CD8-positive, alpha-beta T cell (primary cell): ENCODE measurements at regions of chr1 and their contacts with region 1.

Region 1: DNA sequence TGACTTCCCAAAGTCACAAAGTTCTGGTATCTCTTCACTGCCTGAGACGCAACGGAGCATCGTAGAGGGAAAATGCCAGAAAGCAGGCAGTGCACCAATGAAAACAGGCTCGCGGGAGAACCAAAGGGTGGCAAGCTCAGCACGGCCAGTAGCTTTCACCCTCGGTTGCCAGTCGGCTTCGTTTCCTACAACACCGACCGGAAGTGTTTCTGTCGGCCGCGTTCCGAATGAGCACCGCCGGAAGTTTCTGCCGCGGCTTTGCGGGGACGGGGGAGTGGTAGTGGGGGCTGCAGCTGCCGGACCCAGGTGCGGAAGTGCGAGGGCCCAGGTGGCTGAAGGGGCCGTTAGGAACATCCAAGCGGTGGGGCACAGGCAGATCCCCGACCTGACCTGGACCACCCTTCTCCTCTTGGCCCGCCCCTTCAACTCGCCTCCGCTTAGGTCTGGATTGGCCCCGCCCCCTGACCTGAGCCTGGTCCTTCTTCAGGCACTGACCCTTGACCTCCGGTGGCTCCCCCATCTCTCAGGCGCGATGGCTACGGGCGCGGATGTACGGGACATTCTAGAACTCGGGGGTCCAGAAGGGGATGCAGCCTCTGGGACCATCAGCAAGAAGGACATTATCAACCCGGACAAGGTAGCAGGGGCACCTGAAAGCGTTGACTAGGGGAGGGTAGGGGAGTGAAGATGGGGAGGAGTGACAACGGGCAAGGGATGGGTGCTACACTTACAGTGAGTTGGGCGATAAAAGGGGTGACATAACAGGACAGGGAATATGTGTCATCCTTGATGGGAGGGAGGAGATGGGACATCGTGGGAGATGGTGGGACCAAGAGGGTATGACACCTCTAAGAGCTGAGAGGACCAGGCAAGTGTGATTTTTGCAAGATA is at the start of gene DMAP1:
- DNase-seq: peak; percentile 75 to 95 (median 86)
- ATAC-seq: peak; percentile 83
- H3K4me3 ChIP-seq: peak within 1 kb of the TSS; percentile 91
- H3K4me3 Mint-ChIP-seq: peak within 1 kb of the TSS; percentile 95
- H3K27ac ChIP-seq: peak within 1 kb of the TSS; percentile 61 to 74
- H3K27ac Mint-ChIP-seq: peak within 1 kb of the TSS; percentile 83
- H3K4me1 ChIP-seq: peaks cover 18% of the 10 kb centered on the region
- H3K4me1 Mint-ChIP-seq: peaks cover 42% of the 10 kb centered on the region
- H3K27me3 ChIP-seq: no peaks in the 10 kb centered on the region
- H3K27me3 Mint-ChIP-seq: no peaks in the 10 kb centered on the region
- CTCF ChIP-seq: no peak
- total RNA-seq, gene DMAP1: 59.0 to 59.5 TPM

Region 2: DNA sequence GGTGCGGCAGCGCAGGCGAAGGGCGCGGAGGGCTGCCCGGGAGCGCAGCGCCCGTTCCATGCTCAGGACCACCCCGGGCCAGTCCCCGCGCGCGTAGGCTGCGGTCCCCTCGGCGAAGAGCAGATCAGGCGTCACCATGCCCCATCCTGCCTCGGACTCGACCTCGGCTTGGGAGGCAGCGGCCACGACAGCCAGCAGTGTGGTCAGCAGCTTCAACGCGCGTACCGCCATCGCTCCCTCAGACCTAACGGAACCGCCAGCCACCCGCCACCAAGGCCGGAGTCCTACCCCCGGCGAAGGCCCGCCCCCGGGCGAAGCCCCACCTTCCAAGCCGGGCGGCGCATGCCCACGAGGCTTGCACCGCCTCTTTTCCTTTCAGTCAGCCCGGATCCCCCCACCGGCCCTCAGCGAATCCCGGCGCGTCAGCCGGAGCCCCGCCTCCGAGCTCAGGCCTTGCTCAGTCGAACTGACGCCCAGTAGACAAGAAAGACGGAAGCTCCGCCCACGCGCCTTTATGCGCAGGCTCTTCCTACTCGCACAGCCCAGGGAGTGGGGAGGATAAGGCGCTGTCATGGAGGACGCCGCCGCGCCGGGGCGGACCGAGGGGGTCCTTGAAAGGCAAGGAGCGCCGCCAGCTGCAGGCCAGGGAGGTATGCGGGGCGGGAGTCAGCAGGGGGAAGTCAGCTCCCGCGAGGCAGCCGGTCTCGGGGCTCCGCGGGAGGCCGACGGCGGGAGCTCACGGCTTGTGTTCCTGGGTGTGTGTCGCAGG is 1446.5 kb before region 1 on chr1 and contains the starts of genes C1orf50 and P3H1:
- CTCF ChIA-PET with region 1: no interaction called
- POLR2A ChIA-PET with region 1: no interaction called
- intact Hi-C with region 1: loop called in 1 of 2 experiments (anchors 2 kb)
- DNase-seq: peak; percentile 99 to 100 (median 99)
- ATAC-seq: peak; percentile 92
- H3K4me3 ChIP-seq: peak within 1 kb of the TSS; percentile 73 to 97
- H3K4me3 Mint-ChIP-seq: no peak within 1 kb of the TSS
- H3K27ac ChIP-seq: peak within 1 kb of the TSS; percentile 87 to 88
- H3K27ac Mint-ChIP-seq: peak within 1 kb of the TSS; percentile 97
- H3K4me1 ChIP-seq: peaks cover 40% of the 10 kb centered on the region
- H3K4me1 Mint-ChIP-seq: peaks cover 36% of the 10 kb centered on the region
- H3K27me3 ChIP-seq: no peaks in the 10 kb centered on the region
- H3K27me3 Mint-ChIP-seq: no peaks in the 10 kb centered on the region
- CTCF ChIP-seq: no peak
- total RNA-seq, gene C1orf50: 16.1 to 20.3 TPM
- total RNA-seq, gene P3H1: 19.6 to 22.5 TPM

Region 3: GRCh38 chr1:43832255-43832654 is 381.2 kb before region 1 on chr1:
- CTCF ChIA-PET with region 1: no interaction called
- POLR2A ChIA-PET with region 1: no interaction called
- intact Hi-C with region 1: no loop called
- DNase-seq: no peak
- ATAC-seq: no peak
- H3K4me3 ChIP-seq: no peak overlapping the region
- H3K4me3 Mint-ChIP-seq: no peak overlapping the region
- H3K27ac ChIP-seq: no peak overlapping the region
- H3K27ac Mint-ChIP-seq: no peak overlapping the region
- H3K4me1 ChIP-seq: peaks cover 56% of the 10 kb centered on the region
- H3K4me1 Mint-ChIP-seq: peaks cover 62% of the 10 kb centered on the region
- H3K27me3 ChIP-seq: no peaks in the 10 kb centered on the region
- H3K27me3 Mint-ChIP-seq: no peaks in the 10 kb centered on the region
- CTCF ChIP-seq: no peak

Region 4: DNA sequence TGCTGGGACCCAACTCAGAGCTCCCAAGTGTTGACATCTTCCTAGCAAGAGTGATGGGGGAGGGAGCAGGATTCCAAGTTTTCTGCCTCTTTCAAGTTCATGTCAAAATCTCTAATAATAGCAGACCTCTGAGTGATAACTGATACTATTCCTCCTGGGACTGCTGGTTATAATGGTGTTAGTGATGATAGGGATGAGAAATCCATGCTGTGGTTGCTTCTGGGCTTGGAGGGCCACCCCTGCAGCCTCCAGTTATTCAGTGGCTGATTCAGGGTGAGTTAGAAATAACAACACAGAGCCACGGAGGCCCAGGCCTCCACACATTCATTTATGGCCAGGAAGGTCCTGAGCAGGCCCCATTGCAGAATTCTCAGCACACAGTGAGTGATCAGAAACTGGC is 320.5 kb before region 1 on chr1:
- CTCF ChIA-PET with region 1: no interaction called
- POLR2A ChIA-PET with region 1: no interaction called
- intact Hi-C with region 1: no loop called
- DNase-seq: no peak
- ATAC-seq: no peak
- H3K4me3 ChIP-seq: no peak overlapping the region
- H3K4me3 Mint-ChIP-seq: no peak overlapping the region
- H3K27ac ChIP-seq: no peak overlapping the region
- H3K27ac Mint-ChIP-seq: no peak overlapping the region
- H3K4me1 ChIP-seq: no peaks in the 10 kb centered on the region
- H3K4me1 Mint-ChIP-seq: no peaks in the 10 kb centered on the region
- H3K27me3 ChIP-seq: no peaks in the 10 kb centered on the region
- H3K27me3 Mint-ChIP-seq: no peaks in the 10 kb centered on the region
- CTCF ChIP-seq: no peak

Region 5: GRCh38 chr1:43974443-43975248 is 238.8 kb before region 1 on chr1 and contains the start of gene ATP6V0B:
- CTCF ChIA-PET with region 1: no interaction called
- POLR2A ChIA-PET with region 1: no interaction called
- intact Hi-C with region 1: loop called (anchors 1 to 5 kb)
- DNase-seq: peak; percentile 83 to 96 (median 93)
- ATAC-seq: peak; percentile 69
- H3K4me3 ChIP-seq: peak within 1 kb of the TSS; percentile 95 to 97
- H3K4me3 Mint-ChIP-seq: peak within 1 kb of the TSS; percentile 92
- H3K27ac ChIP-seq: peak within 1 kb of the TSS; percentile 69 to 88
- H3K27ac Mint-ChIP-seq: peak within 1 kb of the TSS; percentile 95
- H3K4me1 ChIP-seq: peaks cover 37% of the 10 kb centered on the region
- H3K4me1 Mint-ChIP-seq: peaks cover 60% of the 10 kb centered on the region
- H3K27me3 ChIP-seq: no peaks in the 10 kb centered on the region
- H3K27me3 Mint-ChIP-seq: peaks cover 2% of the 10 kb centered on the region
- CTCF ChIP-seq: no peak
- total RNA-seq, gene ATP6V0B: 52.0 to 56.3 TPM

Region 6: GRCh38 chr1:44318097-44319088 is 104.9 kb after region 1 on chr1:
- CTCF ChIA-PET with region 1: interaction called, 23 read pairs
- POLR2A ChIA-PET with region 1: no interaction called
- intact Hi-C with region 1: loop called (anchors 1 kb)
- DNase-seq: peak in 8 of 9 experiments; percentile 12 to 67 (median 50)
- ATAC-seq: no peak
- H3K4me3 ChIP-seq: no peak overlapping the region
- H3K4me3 Mint-ChIP-seq: no peak overlapping the region
- H3K27ac ChIP-seq: no peak overlapping the region
- H3K27ac Mint-ChIP-seq: no peak overlapping the region
- H3K4me1 ChIP-seq: no peaks in the 10 kb centered on the region
- H3K4me1 Mint-ChIP-seq: peaks cover 5% of the 10 kb centered on the region
- H3K27me3 ChIP-seq: no peaks in the 10 kb centered on the region
- H3K27me3 Mint-ChIP-seq: no peaks in the 10 kb centered on the region
- CTCF ChIP-seq: peak; percentile 89

Region 7: DNA sequence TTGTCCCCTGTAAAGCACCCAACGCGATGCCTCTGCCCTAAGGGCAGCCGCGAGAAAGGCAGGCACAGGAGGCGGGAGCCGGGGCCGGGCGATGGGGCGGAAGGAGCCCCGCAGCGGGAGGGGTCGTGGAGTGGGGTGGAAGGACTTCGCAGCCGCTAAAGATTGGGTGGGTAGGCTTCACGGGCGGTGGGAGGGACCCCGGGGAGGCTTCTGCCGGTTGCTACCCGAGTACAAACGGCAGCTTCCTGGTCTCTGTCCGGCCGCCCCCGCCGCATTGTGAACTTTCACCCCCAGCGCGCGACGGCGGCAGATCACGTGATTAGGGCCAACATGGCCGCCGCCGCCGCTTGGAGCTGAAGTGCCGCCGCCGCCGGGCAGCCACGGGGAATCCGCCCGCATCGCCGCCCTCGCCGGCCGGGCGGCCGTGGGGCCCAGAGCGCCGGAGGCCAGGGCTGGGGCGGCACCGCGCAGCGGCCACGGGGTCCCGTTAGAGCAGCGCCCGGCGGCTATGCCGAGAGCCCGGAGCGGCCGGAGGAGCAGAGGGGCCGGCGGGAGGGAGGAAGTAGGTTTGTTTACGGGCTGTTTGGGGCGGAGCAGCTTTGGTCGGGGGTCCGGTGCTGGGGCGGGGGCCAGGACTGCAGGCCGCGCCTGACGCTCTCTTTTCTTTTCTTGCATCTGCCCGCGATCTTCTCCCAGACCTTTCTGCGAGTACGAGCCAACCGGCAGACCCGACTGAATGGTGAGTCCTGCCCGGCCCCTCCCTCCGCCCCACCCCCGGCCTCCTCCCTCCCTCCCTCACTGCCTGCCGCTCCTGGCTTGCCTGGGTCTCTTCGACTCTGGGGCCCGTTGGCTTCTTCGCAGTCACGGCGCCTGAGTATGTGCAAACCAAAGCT is 418.4 kb after region 1 on chr1:
- CTCF ChIA-PET with region 1: no interaction called
- POLR2A ChIA-PET with region 1: interaction called, 10 read pairs
- intact Hi-C with region 1: no loop called
- DNase-seq: peak; percentile 73 to 95 (median 88)
- ATAC-seq: peak; percentile 75
- H3K4me3 ChIP-seq: peak overlapping the region; percentile 55 to 82
- H3K4me3 Mint-ChIP-seq: peak overlapping the region; percentile 90
- H3K27ac ChIP-seq: peak overlapping the region; percentile 86 to 97
- H3K27ac Mint-ChIP-seq: peak overlapping the region; percentile 98
- H3K4me1 ChIP-seq: peaks cover 20% of the 10 kb centered on the region
- H3K4me1 Mint-ChIP-seq: peaks cover 48% of the 10 kb centered on the region
- H3K27me3 ChIP-seq: no peaks in the 10 kb centered on the region
- H3K27me3 Mint-ChIP-seq: no peaks in the 10 kb centered on the region
- CTCF ChIP-seq: no peak

Region 8: DNA sequence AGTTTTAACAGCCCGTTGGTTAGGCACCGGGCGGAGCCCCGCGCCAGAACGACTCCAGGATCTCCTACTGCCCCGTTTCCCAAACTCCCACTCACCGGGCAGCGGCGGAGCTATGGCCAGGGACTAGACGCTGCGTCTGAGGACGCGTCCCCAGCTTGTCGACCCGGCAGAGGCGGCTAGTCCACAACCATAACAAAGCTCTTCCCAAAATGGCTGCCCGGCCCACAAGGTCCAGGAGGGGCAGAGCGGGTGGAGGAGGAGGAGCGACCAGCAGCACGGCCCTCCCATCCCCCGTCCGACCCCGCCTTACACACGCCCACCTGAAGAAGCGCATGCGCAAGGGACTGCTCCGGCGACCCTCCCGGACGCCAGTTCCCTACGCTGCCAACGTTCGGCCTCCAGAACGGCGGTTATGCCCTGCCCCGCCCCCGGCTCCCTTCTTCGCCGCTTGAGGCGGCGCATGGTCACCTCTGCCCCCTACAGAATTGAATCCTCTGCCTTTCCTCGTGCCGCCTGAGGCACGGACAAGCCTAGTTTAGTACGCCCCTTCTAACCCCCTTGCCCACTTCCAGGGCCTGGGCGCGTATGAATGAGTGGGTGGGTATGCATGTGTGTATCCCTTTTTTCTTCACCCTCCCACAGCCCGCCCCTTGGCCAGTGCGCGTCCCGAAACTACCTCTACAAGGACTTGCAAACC is 1473.0 kb after region 1 on chr1 and contains the start of gene GPBP1L1:
- CTCF ChIA-PET with region 1: no interaction called
- POLR2A ChIA-PET with region 1: no interaction called
- intact Hi-C with region 1: loop called in 1 of 2 experiments (anchors 5 kb)
- DNase-seq: peak; percentile 95 to 98 (median 98)
- ATAC-seq: peak; percentile 72
- H3K4me3 ChIP-seq: peak within 1 kb of the TSS; percentile 99
- H3K4me3 Mint-ChIP-seq: peak within 1 kb of the TSS; percentile 97
- H3K27ac ChIP-seq: peak within 1 kb of the TSS; percentile 84 to 92
- H3K27ac Mint-ChIP-seq: peak within 1 kb of the TSS; percentile 100
- H3K4me1 ChIP-seq: peaks cover 39% of the 10 kb centered on the region
- H3K4me1 Mint-ChIP-seq: peaks cover 59% of the 10 kb centered on the region
- H3K27me3 ChIP-seq: no peaks in the 10 kb centered on the region
- H3K27me3 Mint-ChIP-seq: no peaks in the 10 kb centered on the region
- CTCF ChIP-seq: no peak
- total RNA-seq, gene GPBP1L1: 125 to 128 TPM